Breast epithelium (tissue), 4 donors: ENCODE measurements at regions of chr1 and their contacts with region 1.

Region 1: GRCh38 chr1:230176871-230177411 is 109.9 kb downstream of the GALNT2 start:
- DNase-seq: no peak
- H3K4me3 ChIP-seq: peak overlapping the region; percentile 4 to 52 (median 17)
- H3K27ac ChIP-seq: no peak overlapping the region
- H3K4me1 ChIP-seq: no peaks in the 10 kb centered on the region
- H3K27me3 ChIP-seq: no peaks in the 10 kb centered on the region
- CTCF ChIP-seq: no peak
- POLR2A ChIP-seq: no peak

Region 2: DNA sequence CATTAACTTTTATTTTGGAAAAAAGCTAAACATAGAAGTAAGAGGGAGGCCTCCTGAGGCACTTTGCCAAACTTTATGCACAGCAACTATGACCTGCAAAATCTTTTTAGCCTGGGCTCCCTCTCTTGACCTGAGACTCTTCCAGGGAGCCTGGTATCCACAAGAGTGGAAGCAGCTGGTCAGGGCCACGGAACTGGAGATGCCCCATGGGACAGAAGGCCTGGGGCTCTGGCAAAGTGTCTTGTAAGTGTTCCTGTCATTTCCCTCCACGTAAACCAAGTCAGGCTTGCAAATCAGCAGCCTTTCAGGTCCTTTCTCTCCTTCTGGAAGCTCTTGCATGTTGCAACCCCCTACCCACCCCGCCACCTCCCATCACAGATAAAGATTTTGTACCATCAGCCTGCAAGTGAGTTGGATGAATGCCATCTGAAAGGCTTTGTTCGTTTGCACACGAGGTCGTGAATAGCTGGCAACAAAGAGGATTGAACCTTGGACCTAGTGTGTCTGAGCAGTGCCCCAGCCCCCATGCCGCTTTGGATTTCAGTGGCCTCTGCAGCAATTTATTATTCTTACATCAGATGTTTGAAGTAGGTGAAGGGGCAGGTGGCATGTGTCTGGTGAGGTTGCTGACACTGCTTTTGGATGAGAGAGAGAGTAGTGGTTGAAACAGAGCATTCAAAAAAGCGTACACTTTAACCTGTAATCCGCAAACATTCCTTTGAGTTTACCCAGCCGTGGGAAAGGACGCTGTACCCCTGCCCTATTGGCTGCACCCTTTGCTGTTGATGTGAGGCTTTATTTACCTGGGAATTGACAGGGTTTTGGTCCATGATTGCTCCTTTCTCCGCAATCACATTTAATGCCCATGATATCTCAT is 18.3 kb before region 1 on chr1:
- intact Hi-C with region 1: loop called (anchors 1 kb)
- DNase-seq: no peak
- H3K4me3 ChIP-seq: no peak overlapping the region
- H3K27ac ChIP-seq: no peak overlapping the region
- H3K4me1 ChIP-seq: no peaks in the 10 kb centered on the region
- H3K27me3 ChIP-seq: no peaks in the 10 kb centered on the region
- CTCF ChIP-seq: no peak
- POLR2A ChIP-seq: no peak